ENCODE measurements at regions of chrX and their contacts with region 1.

Region 1: GRCh38 chrX:26783512-26784225 is 567.7 kb downstream of the MAGEB5 start:
- DNase-seq: no peak
- H3K4me3 Mint-ChIP-seq: no peak overlapping the region
- H3K27ac Mint-ChIP-seq: no peak overlapping the region
- H3K4me1 Mint-ChIP-seq: no peaks in the 10 kb centered on the region
- H3K27me3 Mint-ChIP-seq: no peaks in the 10 kb centered on the region

Region 2: GRCh38 chrX:27186664-27187063 is 403.0 kb after region 1 on chrX:
- intact Hi-C with region 1: loop called (anchors 2 kb)
- DNase-seq: no peak
- H3K4me3 Mint-ChIP-seq: no peak overlapping the region
- H3K27ac Mint-ChIP-seq: no peak overlapping the region
- H3K4me1 Mint-ChIP-seq: no peaks in the 10 kb centered on the region
- H3K27me3 Mint-ChIP-seq: no peaks in the 10 kb centered on the region